ENCODE measurements at regions of chr9 and their contacts with region 1.

Region 1: DNA sequence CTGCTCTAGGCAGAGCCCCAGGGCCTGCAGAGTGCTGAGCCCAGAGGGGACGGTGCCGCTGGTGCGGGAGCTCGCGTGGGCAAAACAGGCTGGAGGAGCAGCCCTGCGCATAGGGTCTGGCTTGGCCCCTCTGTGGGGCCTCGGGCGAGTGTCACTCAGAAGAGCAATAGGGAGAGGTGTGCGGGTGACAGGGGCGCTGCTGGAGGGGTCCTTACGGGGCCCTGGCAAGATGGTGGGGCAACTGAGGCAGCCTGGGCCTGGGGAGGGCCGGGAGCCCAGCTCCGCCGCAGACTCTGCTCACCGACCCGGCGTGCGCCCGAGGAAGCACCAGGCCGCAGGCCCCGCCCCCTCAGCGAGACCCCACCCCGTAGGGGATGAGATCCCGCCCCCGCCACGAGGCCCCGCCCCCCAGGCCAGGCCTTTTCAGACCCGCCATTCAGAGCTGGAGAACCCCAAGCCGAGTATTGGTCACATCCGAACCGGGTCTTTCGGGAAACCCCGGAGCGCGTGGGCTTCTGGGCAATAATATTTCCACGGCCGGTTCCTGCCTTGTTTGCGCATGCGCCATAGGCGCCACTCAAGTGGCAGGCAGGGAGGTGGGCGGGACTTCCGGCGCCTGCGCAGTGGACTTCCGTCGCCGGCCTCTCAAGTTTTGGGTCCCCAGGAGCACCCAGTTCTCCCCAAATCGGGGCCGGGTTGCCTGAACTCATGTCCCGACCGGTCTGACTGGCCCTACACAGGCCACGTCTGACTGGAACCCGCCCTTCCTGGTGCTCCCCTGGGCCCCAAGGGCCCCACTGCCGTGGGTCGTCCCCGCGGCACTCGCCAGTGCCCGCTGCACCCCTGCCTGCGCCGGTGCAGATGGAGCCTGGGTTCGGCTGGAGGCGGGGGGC is 1.3 kb upstream of the RNF208 start:
- DNase-seq: peak; percentile 99
- H3K4me3 ChIP-seq: peak overlapping the region; percentile 54 to 65 (median 60)
- H3K27ac ChIP-seq: peak overlapping the region; percentile 84 to 91 (median 88)
- H3K4me1 ChIP-seq: peaks cover 0 to 31% (median 24%) of the 10 kb centered on the region in 4 donors
- H3K27me3 ChIP-seq: peaks cover under 1 to 4% (median 4%) of the 10 kb centered on the region in 3 donors
- CTCF ChIP-seq: no peak
- EP300 ChIP-seq: peak in 1 of 4 donors; percentile 64
- POLR2A ChIP-seq: peak; percentile 15 to 19

Region 2: DNA sequence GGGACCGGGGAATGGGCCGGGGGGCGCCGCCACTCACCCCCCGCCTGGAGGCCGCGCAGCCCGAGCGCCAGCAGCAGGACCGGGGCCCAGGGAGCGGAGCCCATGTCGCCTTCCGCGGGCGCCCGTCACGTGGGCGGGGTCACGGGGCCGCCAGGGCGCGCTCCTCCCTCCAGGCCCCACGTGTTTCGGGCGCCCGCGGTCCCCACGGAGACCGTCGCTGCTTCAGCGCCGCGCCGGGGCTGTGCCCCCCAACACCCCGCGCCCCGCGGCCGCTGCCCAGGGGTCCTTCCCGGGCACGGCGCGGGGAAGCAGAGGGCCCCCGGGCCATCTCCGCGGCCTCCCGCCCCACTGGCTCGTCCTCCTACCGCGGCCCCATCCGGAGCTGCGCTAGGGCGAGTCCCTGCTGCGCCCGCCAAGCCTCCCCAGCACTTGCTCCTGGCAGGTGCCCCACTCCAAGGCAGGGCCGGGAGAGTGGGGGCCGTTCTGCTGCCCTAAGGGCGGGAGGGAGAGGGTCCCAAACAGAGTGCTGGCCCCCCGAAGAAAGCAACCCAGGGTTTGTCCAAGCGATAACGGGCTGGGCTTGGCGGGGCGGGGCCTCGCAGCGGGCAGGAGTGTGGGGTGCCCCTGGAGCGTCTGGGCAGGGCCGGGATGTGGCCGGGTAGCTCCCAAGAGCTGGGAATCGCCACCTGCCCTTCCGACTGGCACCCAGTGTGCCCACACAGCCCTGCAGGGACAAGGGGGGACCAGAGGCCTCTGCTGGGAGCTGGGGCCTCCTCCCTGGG is 108.5 kb before region 1 on chr9 and contains the start of gene DPP7:
- intact Hi-C with region 1: loop called (anchors 2 kb)
- DNase-seq: peak; percentile 87
- H3K4me3 ChIP-seq: peak within 1 kb of the TSS; percentile 67 to 86 (median 74)
- H3K27ac ChIP-seq: peak within 1 kb of the TSS; percentile 44 to 66 (median 52)
- H3K4me1 ChIP-seq: peaks cover 0 to 18% (median 14%) of the 10 kb centered on the region in 4 donors
- H3K27me3 ChIP-seq: no peaks in the 10 kb centered on the region
- CTCF ChIP-seq: no peak
- EP300 ChIP-seq: no peak
- POLR2A ChIP-seq: no peak
- total RNA-seq, gene DPP7: 88.5 to 140 (median 111) TPM

Region 3: GRCh38 chr9:137188490-137189296 is 34.6 kb before region 1 on chr9 and contains the starts of genes ANAPC2 and SSNA1:
- intact Hi-C with region 1: loop called (anchors 5 kb)
- DNase-seq: peak; percentile 96
- H3K4me3 ChIP-seq: peak within 1 kb of the TSS; percentile 62 to 96 (median 72)
- H3K27ac ChIP-seq: peak within 1 kb of the TSS; percentile 95 to 99 (median 97)
- H3K4me1 ChIP-seq: peaks cover 0 to 47% (median 45%) of the 10 kb centered on the region in 4 donors
- H3K27me3 ChIP-seq: no peaks in the 10 kb centered on the region
- CTCF ChIP-seq: no peak
- EP300 ChIP-seq: no peak
- POLR2A ChIP-seq: peak; percentile 70 to 72
- total RNA-seq, gene ANAPC2: 21.0 to 27.4 (median 24.6) TPM
- total RNA-seq, gene SSNA1: 39.6 to 122 (median 76.3) TPM

Region 4: DNA sequence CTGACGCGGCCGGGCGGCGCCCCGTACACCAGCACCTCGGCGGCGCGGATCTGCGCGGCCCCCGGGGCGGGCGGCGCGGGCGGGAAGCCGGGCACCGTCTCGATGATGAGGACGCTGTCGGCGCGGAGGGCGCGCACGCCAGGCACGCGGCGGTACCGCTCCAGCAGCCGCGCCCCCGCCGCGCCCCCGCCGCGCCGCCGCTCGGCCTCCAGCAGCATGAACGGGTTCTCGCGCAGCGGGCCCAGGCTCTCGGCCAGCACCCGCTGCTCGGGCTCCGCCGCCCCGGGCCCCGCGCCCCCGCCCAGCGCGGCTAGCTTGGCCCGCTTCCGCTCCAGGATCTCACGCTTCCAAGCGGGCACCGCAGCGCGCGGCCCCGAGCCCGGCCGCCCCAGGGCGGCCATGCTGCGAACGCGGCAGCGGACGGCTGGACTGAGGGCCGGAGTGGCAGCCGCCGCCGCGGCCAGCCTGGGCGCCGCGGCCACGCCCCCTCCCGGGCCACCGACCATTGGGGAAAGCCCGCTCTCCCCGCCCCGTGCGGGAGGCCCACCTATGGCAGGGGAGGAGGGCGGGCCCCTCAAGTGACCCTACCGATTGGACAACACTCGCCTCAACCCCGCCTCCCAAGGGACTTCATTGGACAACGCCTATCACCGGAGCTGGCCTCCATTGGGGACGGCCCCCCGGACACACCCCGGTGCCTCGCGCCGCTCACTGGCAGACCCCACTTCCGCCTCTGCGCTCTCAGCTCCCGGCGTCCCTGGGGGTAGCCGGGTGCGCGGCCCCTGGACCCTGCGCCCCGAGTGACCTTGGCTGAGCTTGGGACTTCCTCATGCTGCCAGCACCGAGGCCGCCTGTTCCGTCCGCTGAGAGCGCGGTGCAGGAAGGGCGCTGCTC is 22.8 kb before region 1 on chr9 and contains the start of gene TPRN:
- intact Hi-C with region 1: loop called (anchors 1 kb)
- DNase-seq: peak; percentile 100
- H3K4me3 ChIP-seq: peak within 1 kb of the TSS; percentile 54 to 67 (median 66)
- H3K27ac ChIP-seq: peak within 1 kb of the TSS; percentile 78 to 84 (median 82)
- H3K4me1 ChIP-seq: peaks cover 0 to 68% (median 66%) of the 10 kb centered on the region in 4 donors
- H3K27me3 ChIP-seq: no peaks in the 10 kb centered on the region
- CTCF ChIP-seq: no peak
- EP300 ChIP-seq: no peak
- POLR2A ChIP-seq: peak; percentile 39 to 53
- total RNA-seq, gene TPRN: 3.0 to 4.6 (median 3.8) TPM

Region 5: DNA sequence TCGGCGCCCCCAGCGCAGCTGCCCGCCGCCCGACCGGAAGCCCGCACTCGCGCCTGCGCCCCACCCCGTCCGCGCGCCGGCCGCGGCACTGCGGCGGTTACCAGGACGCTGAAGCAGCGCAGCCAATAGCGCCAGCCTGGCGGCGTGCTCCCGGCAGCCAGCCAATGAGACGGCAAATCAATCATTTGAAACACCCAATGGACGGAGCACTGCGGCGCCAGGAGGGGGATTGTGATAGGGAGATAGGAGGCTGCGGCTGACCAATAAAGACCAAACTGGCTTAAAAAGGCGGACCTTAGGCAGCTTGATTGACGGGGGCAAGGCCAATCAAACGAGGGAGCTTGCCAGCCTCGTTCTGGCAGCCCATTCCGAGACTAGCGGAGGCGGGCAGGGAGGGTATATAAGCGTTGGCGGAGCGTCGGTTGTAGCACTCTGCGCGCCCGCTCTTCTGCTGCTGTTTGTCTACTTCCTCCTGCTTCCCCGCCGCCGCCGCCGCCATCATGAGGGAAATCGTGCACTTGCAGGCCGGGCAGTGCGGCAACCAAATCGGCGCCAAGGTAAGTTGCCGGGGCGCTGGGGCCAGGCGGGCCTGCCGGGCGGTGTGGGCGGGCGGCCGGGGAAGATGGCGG is 17.7 kb after region 1 on chr9 and contains the start of gene TUBB4B:
- intact Hi-C with region 1: loop called (anchors 2 kb)
- DNase-seq: peak; percentile 100
- H3K4me3 ChIP-seq: peak within 1 kb of the TSS; percentile 79 to 90 (median 86)
- H3K27ac ChIP-seq: peak within 1 kb of the TSS; percentile 98 to 100 (median 98)
- H3K4me1 ChIP-seq: peaks cover 2 to 69% (median 53%) of the 10 kb centered on the region in 4 donors
- H3K27me3 ChIP-seq: no peaks in the 10 kb centered on the region
- CTCF ChIP-seq: no peak
- EP300 ChIP-seq: no peak
- POLR2A ChIP-seq: peak; percentile 100
- total RNA-seq, gene TUBB4B: 141 to 196 (median 164) TPM

Region 6: DNA sequence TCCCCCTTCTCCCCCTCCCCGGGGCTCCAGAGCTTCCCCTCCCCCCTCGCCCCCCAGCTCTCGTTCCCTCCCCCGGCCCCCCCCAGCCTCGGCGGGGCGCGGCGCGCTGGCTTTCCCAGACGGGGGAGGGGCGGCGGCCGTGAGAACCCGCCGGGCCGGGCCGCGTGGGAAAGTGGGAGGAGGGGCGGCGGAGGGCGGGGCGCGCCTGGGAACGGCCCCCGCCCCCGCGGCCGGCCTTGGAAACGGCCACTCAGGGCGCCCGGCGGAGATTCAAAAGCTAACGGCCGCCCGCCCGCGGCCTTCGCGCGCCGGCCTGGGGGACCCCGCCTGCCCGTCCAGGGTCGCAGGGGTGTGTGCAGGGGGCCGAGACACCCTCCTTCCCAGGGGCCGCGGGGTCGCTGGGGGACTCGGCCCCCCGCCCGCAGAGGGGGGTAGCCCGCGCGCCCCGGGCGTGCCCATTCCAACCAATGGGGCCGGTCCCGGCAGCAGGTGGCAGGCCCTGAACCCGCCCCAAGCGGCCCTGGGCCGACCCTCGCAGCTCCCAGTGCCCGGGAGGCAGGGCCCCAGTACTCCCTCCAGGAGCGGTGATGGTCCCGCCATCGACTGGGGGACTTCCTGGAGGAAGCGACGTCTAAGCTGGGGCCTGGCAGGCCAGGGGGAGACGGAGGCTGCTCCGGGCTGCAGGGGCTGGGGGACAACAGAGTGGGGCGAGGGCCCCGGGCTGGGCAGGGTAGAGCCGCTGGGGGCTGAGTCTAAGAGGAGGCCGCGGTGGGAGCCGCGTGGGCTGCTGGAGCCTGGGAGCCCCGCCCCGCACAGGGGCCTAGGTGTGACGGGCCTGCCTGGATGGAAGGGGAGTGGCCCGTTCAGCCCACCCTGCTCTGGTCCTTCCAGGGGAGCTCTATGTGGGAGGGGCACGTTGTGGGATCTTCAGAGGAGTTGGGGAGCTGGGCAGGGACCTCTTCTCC is 93.0 kb after region 1 on chr9:
- intact Hi-C with region 1: no loop called
- DNase-seq: peak; percentile 62
- H3K4me3 ChIP-seq: peak overlapping the region in 3 of 4 donors; percentile 6 to 39 (median 35)
- H3K27ac ChIP-seq: peak overlapping the region in 1 of 4 donors; percentile 45
- H3K4me1 ChIP-seq: peaks cover 0 to 26% (median 15%) of the 10 kb centered on the region in 4 donors
- H3K27me3 ChIP-seq: peaks cover 13 to 29% (median 28%) of the 10 kb centered on the region in 3 donors
- CTCF ChIP-seq: no peak
- EP300 ChIP-seq: no peak
- POLR2A ChIP-seq: no peak